ENCODE measurements at regions of chr19 and their contacts with region 1.

Region 1: DNA sequence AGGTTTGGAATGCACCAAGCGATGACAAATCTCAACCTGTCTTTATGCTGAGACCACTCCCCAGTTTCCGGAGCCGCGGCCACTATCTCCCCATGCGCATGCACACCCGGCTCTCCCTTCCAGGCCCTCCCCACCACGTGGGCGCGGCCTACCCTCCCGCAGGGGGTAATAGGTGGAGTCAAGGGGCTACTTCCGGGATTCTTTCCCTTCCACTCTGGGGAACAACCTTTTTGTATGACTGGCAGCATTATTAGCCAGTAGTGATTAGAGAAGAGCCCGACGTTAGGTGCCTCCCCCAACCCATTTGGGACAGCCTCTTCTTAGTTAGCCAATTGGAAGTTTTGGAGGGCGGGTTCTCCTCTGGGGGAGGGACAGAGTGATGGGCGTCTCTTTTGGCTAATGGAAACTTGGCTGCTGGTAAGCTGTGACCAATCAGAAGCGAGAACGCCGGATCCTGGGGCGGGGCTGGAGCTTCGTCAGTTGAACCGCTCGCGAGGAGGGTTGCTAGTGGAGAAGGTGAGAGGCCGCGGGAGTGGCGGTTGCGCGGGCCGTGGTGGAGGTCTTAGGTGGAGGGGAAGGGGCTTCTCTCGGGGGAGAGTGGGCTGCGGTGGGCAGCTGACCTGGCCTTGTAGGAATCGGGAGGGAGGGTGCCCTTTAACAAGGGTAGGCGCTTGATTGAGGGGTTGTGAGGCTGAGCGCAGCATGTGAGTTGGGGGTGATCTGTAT is at the start of gene CCDC61:
- DNase-seq: peak; percentile 96 to 99
- H3K4me3 ChIP-seq: peak within 1 kb of the TSS; percentile 77
- H3K27ac ChIP-seq: peak within 1 kb of the TSS; percentile 37
- H3K4me1 ChIP-seq: peaks cover 11% of the 10 kb centered on the region
- H3K27me3 ChIP-seq: no peaks in the 10 kb centered on the region
- CTCF ChIP-seq: no peak
- total RNA-seq, gene CCDC61: 22.8 and 24.8 TPM in 2 replicates

Region 2: DNA sequence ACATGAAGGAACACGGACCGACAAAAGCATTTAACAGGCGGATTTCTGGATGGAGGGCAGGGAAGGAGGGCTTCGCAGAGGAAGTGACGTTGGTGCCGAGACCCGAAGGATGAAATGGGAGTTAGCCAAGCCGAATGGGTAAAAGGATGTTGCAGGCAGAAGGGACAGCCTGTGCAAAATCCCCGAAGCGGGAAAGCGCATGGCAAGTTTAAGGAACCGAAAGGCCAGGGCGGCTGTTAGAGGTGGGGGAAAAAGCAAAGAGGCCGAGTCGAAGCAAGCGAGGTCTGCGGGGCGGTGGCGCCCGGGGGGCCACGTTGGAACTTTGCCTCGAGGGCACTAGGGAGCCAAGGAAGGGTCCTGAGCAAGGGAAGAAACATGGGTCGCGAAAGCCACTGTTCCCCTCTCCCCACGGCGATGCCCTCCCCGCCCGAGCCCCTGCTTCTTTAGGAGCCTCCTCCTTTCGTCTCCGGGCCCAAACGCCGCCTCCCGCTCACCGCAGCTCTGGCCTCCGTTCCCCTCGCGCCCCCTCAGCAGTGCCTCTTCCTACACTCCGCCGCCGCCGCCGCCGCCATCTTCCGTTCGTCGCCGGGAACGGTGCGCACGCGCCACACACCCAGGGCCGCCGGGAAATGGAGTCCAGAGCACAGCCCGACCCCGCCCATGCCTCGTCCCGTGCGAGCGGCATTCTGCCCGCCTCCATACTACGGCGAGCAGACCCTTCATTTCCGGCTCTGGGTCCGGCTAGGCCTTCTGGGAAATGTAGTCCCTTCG is 132.4 kb before region 1 on chr19 and contains the start of gene SYMPK:
- CTCF ChIA-PET with region 1: no interaction called
- POLR2A ChIA-PET with region 1: interaction called, 10 read pairs
- intact Hi-C with region 1: no loop called
- DNase-seq: peak; percentile 97
- H3K4me3 ChIP-seq: peak within 1 kb of the TSS; percentile 67
- H3K27ac ChIP-seq: peak within 1 kb of the TSS; percentile 30
- H3K4me1 ChIP-seq: peaks cover 15% of the 10 kb centered on the region
- H3K27me3 ChIP-seq: peaks cover 41% of the 10 kb centered on the region
- CTCF ChIP-seq: no peak; the same call in 1 of the 2 replicates
- total RNA-seq, gene SYMPK: 85.5 and 121 TPM in 2 replicates

Region 3: GRCh38 chr19:45947926-45948325 is 47.2 kb before region 1 on chr19:
- CTCF ChIA-PET with region 1: no interaction called
- POLR2A ChIA-PET with region 1: no interaction called
- intact Hi-C with region 1: no loop called
- DNase-seq: peak in 1 of 2 experiments; percentile 49
- H3K4me3 ChIP-seq: no peak overlapping the region
- H3K27ac ChIP-seq: no peak overlapping the region
- H3K4me1 ChIP-seq: no peaks in the 10 kb centered on the region
- H3K27me3 ChIP-seq: peaks cover 44% of the 10 kb centered on the region
- CTCF ChIP-seq: no peak

Region 4: GRCh38 chr19:45968626-45969025 is 26.5 kb before region 1 on chr19:
- CTCF ChIA-PET with region 1: no interaction called
- POLR2A ChIA-PET with region 1: no interaction called
- intact Hi-C with region 1: no loop called
- DNase-seq: no peak
- H3K4me3 ChIP-seq: no peak overlapping the region
- H3K27ac ChIP-seq: no peak overlapping the region
- H3K4me1 ChIP-seq: no peaks in the 10 kb centered on the region
- H3K27me3 ChIP-seq: peaks cover 88% of the 10 kb centered on the region
- CTCF ChIP-seq: no peak

Region 5: DNA sequence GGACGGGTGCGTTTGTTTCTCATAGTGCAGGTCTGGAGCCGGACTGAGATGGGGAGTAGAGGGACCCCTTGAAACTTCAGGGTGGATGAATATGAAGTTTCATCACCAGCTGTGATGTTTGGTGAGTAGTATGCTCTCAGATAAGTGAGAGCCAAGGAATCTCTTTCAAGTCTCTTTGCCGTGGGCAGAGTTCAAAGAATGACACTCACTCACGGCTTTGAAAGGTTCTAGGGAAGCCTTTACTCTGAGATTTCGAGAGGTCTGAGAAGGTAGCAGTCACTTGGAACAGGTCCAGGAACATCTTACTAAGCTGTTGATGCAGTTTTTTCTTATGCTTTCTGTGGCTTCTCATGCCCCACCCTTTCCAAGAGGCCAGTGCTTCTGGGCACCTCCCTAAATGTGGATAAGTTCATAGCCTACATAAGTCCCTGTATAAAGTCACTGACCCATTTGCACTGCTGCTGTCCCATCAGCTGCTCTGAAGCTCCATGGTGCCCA is 152.7 kb after region 1 on chr19 and contains the start of gene IGFL2:
- CTCF ChIA-PET with region 1: no interaction called
- POLR2A ChIA-PET with region 1: no interaction called
- intact Hi-C with region 1: no loop called
- DNase-seq: peak in 1 of 2 experiments; percentile 14
- H3K4me3 ChIP-seq: no peak within 1 kb of the TSS
- H3K27ac ChIP-seq: no peak within 1 kb of the TSS
- H3K4me1 ChIP-seq: 0 out of 2 replicates have a peak, but pooled peaks cover 6% of the 10 kb centered on the region
- H3K27me3 ChIP-seq: no peaks in the 10 kb centered on the region
- CTCF ChIP-seq: no peak
- total RNA-seq, gene IGFL2: 1.0 TPM in 1 of 2 replicates, not detected in the other

Region 6: DNA sequence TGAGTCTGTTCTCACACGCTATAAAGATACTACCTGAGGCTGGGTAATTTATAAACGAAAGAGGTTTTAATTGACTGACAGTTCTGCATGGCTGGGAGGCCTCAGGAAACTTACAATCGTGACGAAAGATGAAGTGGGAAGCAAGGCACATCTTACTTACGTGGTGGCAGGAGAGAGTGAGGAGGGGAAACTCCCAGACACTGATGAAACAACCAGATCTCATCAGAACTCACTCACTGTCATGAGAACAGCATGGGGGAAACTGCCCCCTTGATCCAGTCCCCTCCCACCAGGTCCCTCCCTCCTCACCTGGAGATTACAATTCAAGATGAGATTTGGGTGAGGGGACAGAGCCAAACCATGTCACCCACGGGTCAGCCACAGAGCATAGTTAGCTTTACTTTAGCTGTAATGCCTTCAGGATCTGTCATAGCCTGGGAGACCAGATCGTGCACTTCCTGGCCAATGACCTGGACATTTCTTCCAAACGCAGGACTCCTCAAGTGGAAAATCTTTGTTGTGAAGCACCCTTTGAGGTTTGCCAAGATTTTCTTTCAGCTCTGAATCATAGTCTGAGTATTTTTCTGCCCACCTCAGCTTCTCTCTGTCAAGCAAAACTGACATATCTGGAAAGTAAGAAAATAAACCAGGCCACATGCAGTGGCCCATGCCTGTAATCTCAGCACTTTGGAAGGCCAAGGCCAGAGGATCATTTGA is 276.5 kb after region 1 on chr19:
- CTCF ChIA-PET with region 1: no interaction called
- POLR2A ChIA-PET with region 1: interaction called, 10 read pairs
- intact Hi-C with region 1: no loop called
- DNase-seq: peak; percentile 78 to 100
- H3K4me3 ChIP-seq: peak overlapping the region; percentile 19; the same call in 1 of the 2 replicates
- H3K27ac ChIP-seq: peak overlapping the region; percentile 87
- H3K4me1 ChIP-seq: peaks cover 29% of the 10 kb centered on the region
- H3K27me3 ChIP-seq: no peaks in the 10 kb centered on the region
- CTCF ChIP-seq: no peak

Measured in PC-9 (cell line).